Activated B cell treated with CpG ODN at 0.5 μM for 24 hours (primary cell): ENCODE measurements at regions of chr22 and their contacts with region 1.

Region 1: GRCh38 chr22:17243524-17243923 is 24.3 kb upstream of the ADA2 start:
- DNase-seq: peak; percentile 44
- ATAC-seq: peak; percentile 97
- H3K4me3 Mint-ChIP-seq: peak overlapping the region; percentile 55
- H3K27ac Mint-ChIP-seq: peak overlapping the region; percentile 89
- H3K4me1 Mint-ChIP-seq: peaks cover 28% of the 10 kb centered on the region
- H3K27me3 Mint-ChIP-seq: no peaks in the 10 kb centered on the region
- CTCF ChIP-seq: no peak

Region 2: DNA sequence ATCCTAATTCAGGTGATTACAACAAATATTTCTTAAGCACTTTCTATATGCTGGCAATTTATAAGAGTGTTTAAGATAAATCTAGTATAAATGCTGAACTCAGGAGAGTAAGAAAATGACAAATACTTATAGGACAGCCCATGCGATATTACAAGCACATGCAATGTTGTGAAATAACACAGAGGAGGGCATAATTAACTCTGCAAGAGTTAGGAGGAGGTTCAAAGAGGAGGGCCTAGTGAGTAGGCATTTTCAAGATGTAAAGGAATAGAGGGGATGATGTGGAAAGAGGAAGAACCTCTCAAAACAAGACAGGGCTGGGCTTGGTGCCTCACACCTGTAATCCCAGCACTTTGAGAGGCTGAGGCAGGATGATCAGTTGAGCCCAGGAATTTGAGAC is 195.9 kb before region 1 on chr22:
- CTCF ChIA-PET with region 1: no interaction called
- POLR2A ChIA-PET with region 1: no interaction called
- intact Hi-C with region 1: no loop called
- DNase-seq: no peak
- ATAC-seq: no peak
- H3K4me3 Mint-ChIP-seq: no peak overlapping the region
- H3K27ac Mint-ChIP-seq: no peak overlapping the region
- H3K4me1 Mint-ChIP-seq: peaks cover 26% of the 10 kb centered on the region
- H3K27me3 Mint-ChIP-seq: no peaks in the 10 kb centered on the region
- CTCF ChIP-seq: no peak

Region 3: GRCh38 chr22:17228725-17229126 is 14.8 kb before region 1 on chr22:
- CTCF ChIA-PET with region 1: no interaction called
- POLR2A ChIA-PET with region 1: interaction called, 20 read pairs
- intact Hi-C with region 1: no loop called
- DNase-seq: no peak
- ATAC-seq: peak; percentile 84
- H3K4me3 Mint-ChIP-seq: peak overlapping the region; percentile 52
- H3K27ac Mint-ChIP-seq: peak overlapping the region; percentile 62
- H3K4me1 Mint-ChIP-seq: peaks cover 19% of the 10 kb centered on the region
- H3K27me3 Mint-ChIP-seq: no peaks in the 10 kb centered on the region
- CTCF ChIP-seq: no peak